ENCODE measurements at regions of chr5 and their contacts with region 1.

Region 1: DNA sequence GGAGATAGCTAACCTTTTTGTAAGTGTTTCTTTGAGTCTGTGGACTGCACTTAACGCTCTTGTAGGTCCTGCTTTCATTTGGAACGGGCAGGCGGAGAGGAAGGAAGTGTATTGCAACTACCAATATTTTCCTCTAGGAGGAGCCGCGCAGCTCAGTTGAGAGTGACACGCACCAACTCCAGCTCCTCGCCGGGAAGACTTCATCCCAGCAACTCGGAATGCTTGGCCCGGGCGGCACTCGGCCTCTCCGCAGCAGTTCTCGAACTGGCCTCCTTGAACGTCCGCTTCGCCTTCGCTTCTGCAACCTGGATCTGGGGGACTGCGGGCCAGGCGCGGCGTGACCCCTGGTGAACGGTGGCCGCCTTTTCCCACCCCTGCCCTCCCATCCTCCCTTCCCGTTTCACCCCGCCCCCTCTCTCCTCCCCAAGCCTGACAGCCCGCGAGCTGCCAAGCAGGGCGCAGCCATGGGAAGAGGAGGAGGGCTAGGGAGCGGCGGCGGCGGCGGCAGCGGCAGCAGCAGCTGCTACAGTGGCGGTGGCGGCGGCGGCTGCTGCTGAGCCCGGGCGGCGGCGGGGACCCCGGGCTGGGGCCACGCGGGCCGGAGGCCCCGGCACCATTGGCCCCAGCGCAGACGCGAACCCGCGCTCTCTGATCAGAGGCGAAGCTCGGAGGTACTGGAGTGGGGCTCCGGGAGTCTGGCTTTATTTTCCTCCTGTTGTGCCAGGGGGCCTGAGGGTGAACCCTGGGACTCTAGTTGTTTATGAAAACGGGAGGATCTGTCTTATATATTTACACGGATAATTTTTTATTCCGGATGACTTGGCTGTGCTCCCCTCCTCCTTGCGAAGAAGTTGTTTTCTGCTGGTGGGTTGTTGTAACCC is at the start of gene GHR:
- DNase-seq: peak; percentile 72
- ATAC-seq: peak; percentile 96
- H3K4me3 ChIP-seq: peak within 1 kb of the TSS; percentile 49 to 71 (median 52); a peak in 5 of 6 replicates
- H3K27ac ChIP-seq: no peak within 1 kb of the TSS
- H3K4me1 ChIP-seq: peaks cover 12% of the 10 kb centered on the region
- H3K27me3 ChIP-seq: peaks cover 0 to 24% of the 10 kb centered on the region in 2 experiments; a peak in 3 of 5 replicates
- CTCF ChIP-seq: peak; percentile 85
- EP300 ChIP-seq: no peak
- POLR2A ChIP-seq: no peak
- RAD21 ChIP-seq: peak; percentile 68
- total RNA-seq, gene GHR: not detected in 2 replicates

Region 2: GRCh38 chr5:42454216-42454995 is 30.9 kb after region 1 on chr5:
- CTCF ChIA-PET with region 1: no interaction called
- POLR2A ChIA-PET with region 1: no interaction called
- in situ Hi-C with region 1: no loop called
- intact Hi-C with region 1: no loop called
- DNase-seq: no peak
- ATAC-seq: no peak
- H3K4me3 ChIP-seq: no peak overlapping the region
- H3K27ac ChIP-seq: no peak overlapping the region
- H3K4me1 ChIP-seq: no peaks in the 10 kb centered on the region
- H3K27me3 ChIP-seq: no peaks in the 10 kb centered on the region
- CTCF ChIP-seq: no peak
- EP300 ChIP-seq: no peak
- POLR2A ChIP-seq: no peak
- RAD21 ChIP-seq: no peak

Region 3: DNA sequence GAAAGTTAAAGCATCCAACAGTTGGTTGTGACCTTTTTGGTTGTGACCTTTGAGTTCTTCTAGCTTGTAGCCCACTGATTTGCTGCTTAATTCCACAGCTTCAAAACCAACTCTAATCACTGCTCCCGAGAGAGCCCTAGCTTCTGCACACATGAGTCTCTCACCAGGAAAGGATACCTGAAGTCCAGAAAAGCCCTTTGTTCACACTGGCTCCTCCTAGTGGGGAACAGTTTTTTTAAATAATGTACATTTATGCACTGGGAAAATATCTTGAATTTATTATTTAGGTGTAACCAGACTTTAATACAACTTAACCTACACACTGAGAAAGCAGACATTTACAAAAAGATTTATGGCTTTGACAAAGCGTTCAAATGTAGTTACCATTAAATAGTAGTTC is 212.9 kb after region 1 on chr5:
- CTCF ChIA-PET with region 1: no interaction called
- POLR2A ChIA-PET with region 1: no interaction called
- in situ Hi-C with region 1: no loop called
- intact Hi-C with region 1: loop called (anchors 5 kb)
- DNase-seq: peak; percentile 29
- ATAC-seq: peak; percentile 71
- H3K4me3 ChIP-seq: no peak overlapping the region
- H3K27ac ChIP-seq: no peak overlapping the region
- H3K4me1 ChIP-seq: no peaks in the 10 kb centered on the region
- H3K27me3 ChIP-seq: no peaks in the 10 kb centered on the region
- CTCF ChIP-seq: peak; percentile 35
- EP300 ChIP-seq: no peak
- POLR2A ChIP-seq: no peak
- RAD21 ChIP-seq: no peak